Posterior cingulate gyrus (tissue), 11 donors: ENCODE measurements at regions of chr7 and their contacts with region 1.

Region 1: GRCh38 chr7:31134246-31135188 is 82.4 kb downstream of the ADCYAP1R1 start:
- DNase-seq: peak in 9 of 10 donors; percentile 38 to 93 (median 68)

Region 2: GRCh38 chr7:31633894-31634494 is 499.5 kb after region 1 on chr7:
- intact Hi-C with region 1: loop called (anchors 2 kb)
- DNase-seq: peak in 6 of 10 donors; percentile 40 to 92 (median 65)

Region 3: DNA sequence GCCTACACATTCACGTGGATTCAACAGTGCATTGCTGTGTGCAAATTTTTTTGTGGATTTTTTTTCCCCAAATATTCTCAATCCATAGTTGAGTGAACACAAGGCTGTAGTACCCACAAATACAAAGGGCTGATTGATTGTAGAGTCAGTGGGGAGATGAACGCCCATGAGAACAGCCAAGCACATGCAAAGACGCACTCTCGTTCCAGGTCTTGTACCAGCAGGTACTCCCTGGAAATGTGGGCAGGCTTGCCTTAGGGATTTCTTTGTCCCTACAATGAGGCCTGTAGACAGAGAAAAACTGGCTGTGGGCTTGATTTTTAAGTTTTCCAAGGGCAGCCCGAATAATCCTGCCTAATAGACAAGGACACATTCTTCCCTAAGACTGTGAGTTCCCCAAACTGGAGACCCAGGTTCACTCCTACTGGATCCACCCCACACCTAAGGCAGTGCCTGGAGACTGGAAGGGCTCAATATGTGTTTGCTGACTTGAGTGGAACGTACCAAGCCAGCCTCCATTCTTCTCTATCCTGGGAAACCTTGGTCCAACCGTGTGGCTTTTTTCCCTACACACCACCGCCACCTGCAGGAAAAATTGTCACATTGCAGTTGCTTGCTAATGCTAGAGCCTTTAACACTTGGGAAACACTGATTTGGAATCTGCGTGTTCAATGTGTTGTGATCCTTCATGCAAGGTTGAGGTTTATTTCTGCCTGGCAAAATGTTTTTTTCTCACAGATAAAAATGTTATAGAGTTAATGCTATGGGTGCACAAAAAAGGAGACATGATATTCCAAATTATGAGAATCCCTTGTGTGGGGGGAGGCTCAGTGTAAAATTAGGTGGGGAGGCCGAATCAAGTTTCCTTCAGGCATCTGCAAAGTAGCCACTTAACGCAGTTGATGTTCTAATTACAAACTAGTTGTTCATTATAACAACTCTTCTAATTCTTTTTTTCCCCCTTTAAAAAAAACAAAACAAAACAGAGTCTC is 601.8 kb after region 1 on chr7:
- intact Hi-C with region 1: loop called (anchors 1 kb)
- DNase-seq: peak; percentile 53 to 95 (median 81)

Region 4: DNA sequence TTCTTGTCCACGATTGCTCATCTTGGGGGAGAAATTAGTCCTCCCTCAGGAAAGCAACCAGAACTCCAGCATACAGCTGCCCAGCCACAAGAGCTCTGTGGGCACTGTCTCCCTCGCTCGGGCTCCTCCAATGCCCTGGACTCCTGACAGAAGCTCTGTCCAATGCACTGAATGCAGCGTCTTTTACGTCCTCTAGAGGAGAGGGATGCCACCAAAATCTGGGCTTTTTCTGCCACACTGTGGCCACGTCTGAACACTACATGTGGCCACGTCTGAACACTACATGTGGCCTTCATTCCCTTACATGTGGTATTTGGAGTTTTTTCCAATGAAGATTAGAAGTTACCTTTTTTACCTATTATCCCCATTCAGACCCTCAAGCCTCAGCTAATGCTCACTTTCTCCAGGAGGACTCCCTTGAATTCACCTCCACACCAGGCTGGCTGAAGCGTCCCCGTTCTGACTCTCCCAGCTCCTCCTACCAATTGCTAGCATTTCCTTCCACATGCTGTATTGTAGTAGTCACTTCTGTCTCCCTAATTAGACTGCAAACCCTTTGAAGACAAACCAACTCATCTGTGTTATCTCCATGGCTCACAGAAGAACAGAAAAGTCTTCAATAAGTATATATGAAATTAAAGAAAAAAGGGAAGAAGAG is 1070.0 kb after region 1 on chr7:
- intact Hi-C with region 1: loop called (anchors 5 kb)
- DNase-seq: peak; percentile 68 to 98 (median 86)